HCT116 (cell line): ENCODE measurements at regions of chr14 and their contacts with region 1.

Region 1: GRCh38 chr14:100108042-100108825 is 43.0 kb downstream of the EVL start:
- DNase-seq: peak; percentile 48
- ATAC-seq: peak; percentile 98
- H3K4me3 ChIP-seq: no peak overlapping the region
- H3K27ac ChIP-seq: no peak overlapping the region
- H3K4me1 ChIP-seq: peaks cover 0 to 13% of the 10 kb centered on the region in 2 experiments; a peak in 1 of 4 replicates
- H3K27me3 ChIP-seq: no peaks in the 10 kb centered on the region
- CTCF ChIP-seq: peak; percentile 86 to 94 (median 88)
- POLR2A ChIP-seq: no peak
- RAD21 ChIP-seq: peak; percentile 76

Region 2: DNA sequence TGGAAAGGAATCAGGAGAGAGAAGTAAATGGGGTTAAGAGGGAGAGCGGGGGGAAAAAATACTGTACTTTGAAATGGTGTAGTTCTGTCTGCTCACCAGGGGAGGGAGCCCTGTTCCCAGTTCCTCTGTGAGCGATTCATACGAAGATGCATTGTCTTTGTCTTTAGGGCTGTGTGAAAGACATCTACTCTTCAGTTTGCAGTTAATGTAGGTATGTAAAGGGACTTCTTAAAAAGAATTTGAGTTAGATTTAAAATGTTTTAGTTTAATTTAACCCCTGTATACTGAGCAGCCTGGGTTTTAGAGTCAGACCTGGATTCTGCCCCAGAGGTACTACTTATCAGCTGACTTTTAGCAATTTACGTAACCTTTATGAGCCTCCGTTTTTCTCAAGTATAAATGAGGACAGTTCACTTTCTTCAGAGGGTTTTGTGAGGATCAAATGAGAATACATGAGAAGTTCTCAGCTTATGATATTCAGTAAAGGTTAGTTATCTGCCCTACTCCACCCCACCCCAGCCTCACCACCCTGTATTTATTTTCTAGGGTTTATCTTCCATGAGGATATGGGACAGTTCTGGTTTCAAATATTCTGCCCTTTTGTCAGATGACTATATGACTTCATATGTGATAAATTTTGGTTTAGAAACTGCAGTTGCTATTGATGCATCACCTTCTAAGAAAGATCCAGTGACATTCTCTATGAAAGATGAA is 125.5 kb before region 1 on chr14:
- CTCF ChIA-PET with region 1: interaction called, 27 read pairs
- POLR2A ChIA-PET with region 1: no interaction called
- RAD21 ChIA-PET with region 1: no interaction called
- intact Hi-C with region 1: loop called (anchors 1 kb)
- DNase-seq: peak; percentile 34
- ATAC-seq: peak; percentile 96
- H3K4me3 ChIP-seq: no peak overlapping the region
- H3K27ac ChIP-seq: no peak overlapping the region
- H3K4me1 ChIP-seq: no peaks in the 10 kb centered on the region
- H3K27me3 ChIP-seq: no peaks in the 10 kb centered on the region
- CTCF ChIP-seq: peak; percentile 79 to 92 (median 87)
- POLR2A ChIP-seq: no peak
- RAD21 ChIP-seq: peak; percentile 87

Region 3: DNA sequence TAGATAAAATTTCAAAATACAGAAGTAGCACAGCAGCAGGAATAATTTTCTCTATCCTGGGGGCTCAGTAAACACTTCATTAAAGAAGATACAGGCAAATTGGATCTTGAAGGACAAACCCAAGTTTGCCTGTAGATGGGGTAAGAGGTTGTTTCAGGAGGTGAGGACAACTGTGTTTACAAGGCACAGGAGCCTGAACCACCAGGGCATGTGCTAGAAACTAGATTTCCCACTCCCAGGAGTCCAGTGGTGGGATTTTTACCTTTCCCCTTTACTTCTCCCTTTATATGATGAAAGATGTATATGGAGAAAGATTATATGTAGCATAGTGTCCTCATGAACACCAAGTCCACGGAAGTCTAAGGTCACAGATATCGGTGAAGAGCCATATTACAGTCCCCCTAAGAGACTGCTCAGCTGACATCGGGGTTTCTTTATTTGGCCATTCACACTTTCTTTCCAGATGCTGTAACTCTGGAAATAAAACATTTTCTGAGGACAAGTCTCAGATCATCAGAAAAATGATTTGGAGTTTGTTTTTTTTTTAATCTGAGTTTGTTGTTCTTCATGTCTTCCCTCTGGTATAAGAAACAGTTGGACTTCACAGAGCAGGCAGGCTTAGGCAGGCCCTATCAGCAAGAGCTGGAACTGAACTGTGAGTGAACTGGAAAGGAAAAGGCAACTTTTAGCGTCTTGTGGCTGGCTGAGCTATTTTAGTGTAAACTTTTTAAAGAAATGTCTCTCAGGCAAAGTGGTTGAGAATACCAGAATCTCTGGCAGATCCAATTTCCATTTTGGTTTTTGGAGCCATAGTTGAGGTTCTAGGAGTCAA is 51.1 kb before region 1 on chr14:
- CTCF ChIA-PET with region 1: interaction called, 3 read pairs
- POLR2A ChIA-PET with region 1: no interaction called
- RAD21 ChIA-PET with region 1: no interaction called
- intact Hi-C with region 1: loop called (anchors 1 kb)
- DNase-seq: no peak
- ATAC-seq: peak; percentile 76
- H3K4me3 ChIP-seq: no peak overlapping the region
- H3K27ac ChIP-seq: no peak overlapping the region
- H3K4me1 ChIP-seq: no peaks in the 10 kb centered on the region
- H3K27me3 ChIP-seq: no peaks in the 10 kb centered on the region
- CTCF ChIP-seq: peak; percentile 19 to 41 (median 33); a peak in 2 of 6 replicates
- POLR2A ChIP-seq: no peak
- RAD21 ChIP-seq: peak; percentile 57

Region 4: GRCh38 chr14:100306420-100307219 is 198.4 kb after region 1 on chr14 and contains the start of gene SLC25A29:
- CTCF ChIA-PET with region 1: no interaction called
- POLR2A ChIA-PET with region 1: no interaction called
- RAD21 ChIA-PET with region 1: no interaction called
- intact Hi-C with region 1: no loop called
- DNase-seq: peak; percentile 54
- ATAC-seq: peak; percentile 86
- H3K4me3 ChIP-seq: peak within 1 kb of the TSS; percentile 69 to 72
- H3K27ac ChIP-seq: peak within 1 kb of the TSS; percentile 81
- H3K4me1 ChIP-seq: peaks cover 29 to 37% of the 10 kb centered on the region in 2 experiments
- H3K27me3 ChIP-seq: no peaks in the 10 kb centered on the region
- CTCF ChIP-seq: no peak
- POLR2A ChIP-seq: peak; percentile 72
- RAD21 ChIP-seq: no peak
- total RNA-seq, gene SLC25A29: 38.7 TPM